Breast epithelium (tissue), 4 donors: ENCODE measurements at regions of chr1 and their contacts with region 1.

Region 1: GRCh38 chr1:155834296-155834926 is 22.6 kb downstream of the GON4L start:
- DNase-seq: no peak
- H3K4me3 ChIP-seq: no peak overlapping the region
- H3K27ac ChIP-seq: no peak overlapping the region
- H3K4me1 ChIP-seq: no peaks in the 10 kb centered on the region
- H3K27me3 ChIP-seq: no peaks in the 10 kb centered on the region
- CTCF ChIP-seq: no peak
- POLR2A ChIP-seq: no peak

Region 2: DNA sequence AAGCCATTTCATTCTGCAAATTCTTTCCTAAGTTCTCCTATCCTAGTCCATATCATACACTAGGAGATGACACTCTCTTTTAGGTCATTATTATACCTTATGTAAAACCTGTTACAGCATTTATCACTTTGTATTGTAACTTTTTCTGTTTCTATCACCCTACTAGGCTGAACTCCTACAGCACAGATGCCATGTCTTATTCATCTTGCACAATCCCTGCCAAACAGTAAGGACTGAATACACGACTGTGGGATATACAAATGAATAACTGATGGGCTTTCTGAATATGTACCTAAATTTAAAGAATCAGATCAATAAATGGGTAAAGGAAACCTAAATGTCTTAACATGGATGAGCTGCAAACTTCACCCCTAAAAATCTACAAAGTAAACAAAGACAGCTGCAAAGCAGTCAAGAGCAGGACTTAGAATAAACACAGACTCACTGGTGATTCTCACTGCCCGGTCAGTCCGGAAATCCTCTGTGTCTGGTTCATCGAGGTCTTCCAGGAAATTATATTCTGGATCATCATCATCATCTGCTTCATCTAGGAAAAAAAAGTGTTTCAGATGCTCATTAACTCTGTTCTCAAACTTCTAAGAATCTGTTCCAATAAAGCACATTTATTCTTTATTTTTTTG is 39.7 kb before region 1 on chr1:
- intact Hi-C with region 1: loop called (anchors 5 kb)
- DNase-seq: no peak
- H3K4me3 ChIP-seq: no peak overlapping the region
- H3K27ac ChIP-seq: no peak overlapping the region
- H3K4me1 ChIP-seq: no peaks in the 10 kb centered on the region
- H3K27me3 ChIP-seq: no peaks in the 10 kb centered on the region
- CTCF ChIP-seq: no peak
- POLR2A ChIP-seq: no peak

Region 3: DNA sequence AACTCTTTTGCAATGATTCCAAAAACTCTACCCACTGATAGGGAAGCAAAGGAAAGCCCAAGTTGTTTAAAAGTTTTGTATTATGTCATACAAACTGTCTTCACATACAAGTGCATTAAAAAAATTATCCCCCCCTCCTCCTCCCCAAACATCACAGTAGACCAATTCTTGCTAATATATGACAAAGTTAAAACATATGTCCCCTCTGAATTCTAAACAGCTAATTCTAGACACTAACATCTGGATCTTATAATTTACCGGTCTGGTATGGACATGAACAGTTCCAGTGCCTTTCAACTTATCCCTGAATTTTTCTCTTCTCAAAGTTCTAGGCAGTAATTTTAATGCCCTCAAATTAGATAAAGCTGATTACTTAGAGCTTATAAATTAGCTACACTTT is 63.3 kb after region 1 on chr1:
- intact Hi-C with region 1: no loop called
- DNase-seq: no peak
- H3K4me3 ChIP-seq: no peak overlapping the region
- H3K27ac ChIP-seq: no peak overlapping the region
- H3K4me1 ChIP-seq: no peaks in the 10 kb centered on the region
- H3K27me3 ChIP-seq: no peaks in the 10 kb centered on the region
- CTCF ChIP-seq: no peak
- POLR2A ChIP-seq: no peak

Region 4: DNA sequence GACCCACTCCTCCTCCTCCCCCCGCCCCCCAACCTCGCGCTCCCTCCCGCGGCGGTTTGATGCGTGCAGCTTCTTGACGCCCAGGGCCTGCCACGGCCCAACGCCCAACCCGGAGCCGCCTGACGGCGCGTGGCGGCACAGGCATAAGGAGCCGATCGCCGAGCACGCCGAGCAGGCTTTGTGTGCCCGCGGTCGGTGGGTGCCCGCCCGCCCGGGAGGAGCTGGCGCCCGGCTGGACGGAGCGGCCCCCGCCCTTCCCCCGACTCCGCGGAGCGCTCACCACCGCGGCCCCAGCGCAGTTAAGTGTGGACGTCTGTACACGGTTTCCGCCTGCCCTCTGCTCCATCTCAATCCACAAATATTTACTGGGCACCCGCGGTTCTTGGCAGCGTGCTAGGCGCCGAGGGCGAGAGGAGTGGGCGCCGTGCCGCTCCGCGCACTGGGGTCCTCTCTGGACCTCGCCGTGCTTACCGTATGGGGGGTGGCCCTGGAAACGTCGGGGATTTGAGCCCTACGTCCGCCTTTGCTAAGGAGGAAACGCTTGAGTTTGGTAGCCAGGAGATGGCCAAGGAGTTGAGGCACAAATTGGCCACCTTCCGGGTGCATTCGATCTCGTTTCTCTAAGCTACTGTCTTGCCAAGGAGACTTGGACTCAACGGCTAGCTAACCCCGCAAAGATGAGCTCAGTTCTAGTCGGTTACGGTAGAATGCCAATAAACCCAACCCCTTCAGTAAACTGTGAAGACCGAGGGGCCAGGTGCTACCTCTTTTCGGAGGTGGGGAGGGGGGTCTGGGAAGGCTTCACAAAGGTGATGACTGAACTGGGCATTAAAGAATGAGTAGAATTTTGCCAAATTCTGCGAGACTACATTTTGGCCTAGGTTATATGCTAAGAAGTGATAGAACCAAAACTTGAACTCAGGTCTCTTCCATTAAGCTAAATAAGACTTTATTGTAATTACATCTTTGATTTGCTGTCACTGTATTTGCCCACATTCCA is 917.6 kb after region 1 on chr1:
- intact Hi-C with region 1: no loop called
- DNase-seq: peak; percentile 95 to 98
- H3K4me3 ChIP-seq: peak overlapping the region; percentile 87 to 98 (median 95)
- H3K27ac ChIP-seq: peak overlapping the region; percentile 100
- H3K4me1 ChIP-seq: peaks cover 8 to 28% of the 10 kb centered on the region in 2 donors
- H3K27me3 ChIP-seq: no peaks in the 10 kb centered on the region
- CTCF ChIP-seq: no peak
- POLR2A ChIP-seq: no peak